ENCODE measurements at regions of chr4 and their contacts with region 1.

Region 1: GRCh38 chr4:102344954-102345794 is at the start of gene SLC39A8:
- DNase-seq: peak; percentile 94
- total RNA-seq, gene SLC39A8: 3.0 TPM

Region 2: DNA sequence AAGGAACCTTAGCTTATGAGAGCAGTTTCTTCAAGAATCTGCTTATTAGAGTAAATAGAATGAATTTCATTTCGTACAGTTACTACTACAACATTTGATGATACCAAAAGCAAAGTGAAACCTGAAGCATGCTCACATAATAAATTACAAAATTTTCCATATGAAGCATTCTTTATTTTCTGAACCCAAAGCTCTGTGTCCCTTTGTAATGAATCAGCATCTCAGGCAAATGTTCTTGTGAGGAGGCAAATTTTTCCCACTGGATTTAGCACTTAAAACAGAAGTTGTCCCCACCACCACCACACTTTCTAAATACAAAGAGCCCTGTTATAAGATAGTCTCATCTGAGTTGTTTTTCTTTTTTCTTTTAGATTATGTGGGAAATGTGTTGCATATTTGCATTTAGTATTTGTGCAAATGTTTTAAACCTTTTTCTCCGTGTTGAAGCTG is 85.3 kb after region 1 on chr4:
- intact Hi-C with region 1: loop called (anchors 2 kb)
- DNase-seq: no peak

Region 3: GRCh38 chr4:103075901-103076739 is 730.9 kb after region 1 on chr4:
- intact Hi-C with region 1: loop called (anchors 10 kb)
- DNase-seq: peak; percentile 86